Dendritic cell treated with granulocyte-macrophage colony-stimulating factor and Interleukin-4, amounts not matched to agents 40 ng/mL and 50 ng/mL, for 4 days (primary cell): ENCODE measurements at regions of chr2 and their contacts with region 1.

Region 1: GRCh38 chr2:113138428-113139322 is 11.3 kb downstream of the IL1RN start:
- H3K4me3 Mint-ChIP-seq: no peak overlapping the region
- H3K27ac Mint-ChIP-seq: no peak overlapping the region
- H3K4me1 Mint-ChIP-seq: peaks cover 31% of the 10 kb centered on the region
- H3K27me3 Mint-ChIP-seq: no peaks in the 10 kb centered on the region

Region 2: GRCh38 chr2:112916145-112916571 is 222.5 kb before region 1 on chr2:
- intact Hi-C with region 1: no loop called
- H3K4me3 Mint-ChIP-seq: no peak overlapping the region
- H3K27ac Mint-ChIP-seq: no peak overlapping the region
- H3K4me1 Mint-ChIP-seq: no peaks in the 10 kb centered on the region
- H3K27me3 Mint-ChIP-seq: peaks cover 4% of the 10 kb centered on the region

Region 3: GRCh38 chr2:113080134-113080533 is 58.5 kb before region 1 on chr2:
- intact Hi-C with region 1: loop called (anchors 1 kb)
- H3K4me3 Mint-ChIP-seq: no peak overlapping the region
- H3K27ac Mint-ChIP-seq: no peak overlapping the region
- H3K4me1 Mint-ChIP-seq: peaks cover 77% of the 10 kb centered on the region
- H3K27me3 Mint-ChIP-seq: peaks cover 4% of the 10 kb centered on the region

Region 4: DNA sequence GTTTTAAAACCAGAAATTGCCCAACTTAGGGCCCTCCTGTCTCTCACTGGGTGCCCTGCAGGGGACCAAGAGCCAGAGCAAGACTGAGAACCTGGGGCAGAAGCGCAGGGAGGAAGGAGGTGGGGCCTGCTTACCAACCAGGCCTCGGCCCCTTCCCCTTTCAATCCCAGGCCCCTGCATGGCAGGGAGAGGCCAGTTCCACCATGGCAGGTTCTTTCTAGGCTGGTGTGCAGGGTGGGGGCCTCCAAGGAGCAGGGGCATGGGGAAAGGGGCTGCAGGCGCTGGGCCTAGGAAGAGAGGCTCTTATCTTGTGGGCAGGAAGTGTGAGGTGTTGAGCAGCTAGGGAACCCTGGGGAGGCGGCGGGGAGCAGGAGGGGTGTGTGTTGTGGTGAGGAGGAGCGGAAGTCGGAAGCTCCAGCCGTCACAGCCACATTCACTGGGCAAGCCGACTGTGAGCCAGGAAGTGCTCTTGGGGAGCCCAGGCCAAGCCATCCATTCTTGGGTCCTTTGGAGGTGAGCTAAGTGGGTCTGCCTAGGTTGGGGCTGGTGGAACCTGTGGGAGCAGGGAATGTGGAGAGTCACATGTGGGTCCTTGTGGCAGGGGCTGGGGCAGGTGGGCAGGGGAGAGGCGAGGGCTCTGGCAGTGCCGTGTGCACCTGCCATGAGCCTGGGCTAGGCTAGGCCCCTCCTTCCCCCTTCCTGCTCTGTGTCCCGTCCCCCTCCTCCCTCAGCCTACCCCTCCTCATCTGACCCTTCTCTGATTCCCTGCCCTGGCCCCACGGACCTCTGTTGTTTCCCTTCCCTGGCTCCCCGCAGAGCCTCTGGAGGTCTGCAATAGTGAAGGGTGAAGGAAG is 35.1 kb after region 1 on chr2 and contains the start of gene PSD4:
- intact Hi-C with region 1: loop called (anchors 5 kb)
- H3K4me3 Mint-ChIP-seq: peak within 1 kb of the TSS; percentile 78
- H3K27ac Mint-ChIP-seq: peak within 1 kb of the TSS; percentile 97
- H3K4me1 Mint-ChIP-seq: peaks cover 64% of the 10 kb centered on the region
- H3K27me3 Mint-ChIP-seq: no peaks in the 10 kb centered on the region

Region 5: GRCh38 chr2:113185658-113186432 is 47.2 kb after region 1 on chr2:
- intact Hi-C with region 1: no loop called
- H3K4me3 Mint-ChIP-seq: no peak overlapping the region
- H3K27ac Mint-ChIP-seq: peak overlapping the region; percentile 63
- H3K4me1 Mint-ChIP-seq: peaks cover 76% of the 10 kb centered on the region
- H3K27me3 Mint-ChIP-seq: no peaks in the 10 kb centered on the region

Region 6: DNA sequence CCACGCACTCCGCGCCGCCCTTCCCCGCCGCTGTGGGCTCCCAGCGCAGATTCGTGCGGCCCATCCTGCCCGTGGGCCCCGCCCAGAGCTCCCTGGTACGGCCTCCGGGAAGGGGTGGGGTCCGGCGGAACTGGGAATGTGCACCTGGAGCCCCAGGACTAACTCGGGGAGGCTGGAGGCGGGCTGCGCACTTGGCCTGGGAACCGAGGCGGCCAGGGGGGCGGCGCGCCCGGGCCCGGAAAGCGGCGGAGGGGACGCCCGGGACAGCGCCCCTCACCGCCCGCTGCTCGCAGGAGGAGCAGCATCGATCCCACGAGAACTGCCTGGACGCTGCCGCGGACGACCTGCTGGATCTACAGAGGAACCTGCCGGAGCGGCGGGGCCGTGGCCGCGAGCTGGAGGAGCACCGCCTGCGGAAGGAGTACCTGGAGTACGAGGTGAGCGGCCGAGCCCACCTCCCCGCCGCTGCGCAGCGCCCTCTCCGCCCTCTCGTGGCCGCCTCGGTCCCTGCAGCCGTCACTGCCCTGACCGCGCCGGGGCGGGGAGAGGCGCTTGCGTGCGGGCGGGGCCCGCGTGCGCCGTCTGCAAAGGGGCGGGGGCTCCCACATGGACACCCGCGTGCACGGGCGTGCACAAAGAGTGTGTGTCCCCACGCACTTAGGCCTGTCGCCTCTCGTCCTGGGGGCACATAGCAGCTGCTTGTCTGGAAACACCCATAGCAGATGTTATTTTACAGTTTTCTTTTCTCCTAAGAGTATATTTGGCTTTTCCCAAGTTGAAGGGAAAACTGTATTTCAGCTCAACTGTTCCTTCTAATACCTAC is 60.3 kb after region 1 on chr2:
- intact Hi-C with region 1: loop called (anchors 2 kb)
- H3K4me3 Mint-ChIP-seq: peak overlapping the region; percentile 79
- H3K27ac Mint-ChIP-seq: peak overlapping the region; percentile 53
- H3K4me1 Mint-ChIP-seq: peaks cover 25% of the 10 kb centered on the region
- H3K27me3 Mint-ChIP-seq: no peaks in the 10 kb centered on the region

Region 7: GRCh38 chr2:113370478-113371091 is 231.9 kb after region 1 on chr2:
- intact Hi-C with region 1: loop called (anchors 1 kb)
- H3K4me3 Mint-ChIP-seq: no peak overlapping the region
- H3K27ac Mint-ChIP-seq: no peak overlapping the region
- H3K4me1 Mint-ChIP-seq: peaks cover 55% of the 10 kb centered on the region
- H3K27me3 Mint-ChIP-seq: no peaks in the 10 kb centered on the region

Region 8: DNA sequence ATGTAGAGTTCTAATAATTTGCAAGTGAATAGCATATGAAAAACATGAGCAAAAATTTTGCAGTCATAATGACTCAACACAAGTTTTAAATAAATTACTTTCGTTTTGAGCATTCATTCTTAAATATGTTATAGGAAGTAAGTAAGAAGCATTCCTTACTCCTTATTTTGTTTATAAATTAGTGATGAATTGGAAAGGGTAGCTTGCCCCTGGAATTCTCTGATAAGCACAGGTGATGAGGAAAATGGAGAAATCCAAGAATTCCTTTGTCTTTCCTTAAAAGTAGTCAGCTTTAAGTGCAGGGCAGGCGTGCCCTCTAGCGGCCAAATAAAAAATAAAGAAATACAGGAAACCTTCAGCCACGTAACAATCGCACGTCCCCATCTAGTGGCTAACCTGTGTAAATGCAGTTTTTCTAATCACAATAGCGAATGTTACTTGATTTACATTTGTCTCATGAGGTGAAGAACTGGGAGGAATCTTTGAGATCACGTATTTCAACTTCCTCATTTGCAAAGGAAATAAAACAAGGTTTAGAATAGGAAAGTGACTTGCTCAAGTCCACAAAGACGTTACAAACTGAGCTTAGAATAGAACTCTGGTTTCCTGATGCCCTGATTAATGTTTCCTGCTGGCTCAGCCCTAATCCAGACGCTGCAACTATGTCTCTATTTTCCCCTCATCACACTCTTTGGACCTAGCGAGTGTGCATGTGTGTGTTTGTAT is 251.6 kb after region 1 on chr2:
- intact Hi-C with region 1: loop called (anchors 5 kb)
- H3K4me3 Mint-ChIP-seq: peak overlapping the region; percentile 54
- H3K27ac Mint-ChIP-seq: peak overlapping the region; percentile 92
- H3K4me1 Mint-ChIP-seq: peaks cover 51% of the 10 kb centered on the region
- H3K27me3 Mint-ChIP-seq: no peaks in the 10 kb centered on the region